Caco-2 (cell line): ENCODE measurements at regions of chr10 and their contacts with region 1.

Region 1: GRCh38 chr10:90579602-90580242 is 278.1 kb downstream of the HTR7 start:
- DNase-seq: peak; percentile 31 to 38
- H3K4me3 ChIP-seq: no peak overlapping the region
- H3K4me3 Mint-ChIP-seq: no peak overlapping the region
- H3K27ac Mint-ChIP-seq: no peak overlapping the region
- H3K4me1 ChIP-seq: no peaks in the 10 kb centered on the region
- H3K4me1 Mint-ChIP-seq: no peaks in the 10 kb centered on the region
- H3K27me3 ChIP-seq: no peaks in the 10 kb centered on the region
- H3K27me3 Mint-ChIP-seq: peaks cover 3% of the 10 kb centered on the region
- CTCF ChIP-seq: peak in 1 of 2 experiments; percentile 11

Region 2: DNA sequence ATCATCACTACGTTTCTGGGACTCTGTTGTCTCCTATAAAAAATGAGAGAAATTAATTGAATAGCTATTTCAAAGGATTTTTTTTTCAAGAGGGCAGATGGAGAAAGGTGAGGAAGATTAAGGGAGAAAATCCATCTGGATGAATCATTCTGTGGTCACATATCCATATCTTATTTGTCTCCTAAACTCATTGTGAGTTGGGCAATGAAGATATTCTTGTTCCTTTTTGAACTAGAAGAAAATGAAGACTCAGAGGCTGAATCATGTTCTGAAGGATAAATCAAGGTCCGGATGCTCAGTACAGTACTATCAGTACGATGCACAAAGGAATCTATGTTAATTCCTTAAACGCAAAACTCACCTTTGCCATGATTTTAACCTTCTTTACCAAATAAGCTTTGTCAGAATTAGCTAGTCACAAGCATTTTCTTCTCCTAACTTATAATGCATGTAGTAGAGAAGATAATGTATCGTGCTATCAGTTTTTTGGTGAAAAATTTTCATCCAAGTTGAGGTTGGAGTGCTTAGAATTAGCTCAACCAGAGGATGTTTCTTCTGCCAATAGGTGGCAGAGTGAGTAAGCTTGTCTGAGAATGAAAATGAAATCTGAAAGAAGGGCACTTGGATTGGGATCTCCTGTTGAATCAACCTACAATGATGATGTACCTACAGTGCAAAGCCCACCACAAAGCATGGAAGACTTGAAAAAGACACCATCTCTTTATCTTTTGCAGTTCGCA is 431.4 kb before region 1 on chr10:
- CTCF ChIA-PET with region 1: no interaction called
- POLR2A ChIA-PET with region 1: no interaction called
- intact Hi-C with region 1: loop called (anchors 1 kb)
- DNase-seq: peak in 1 of 2 experiments; percentile 16
- H3K4me3 ChIP-seq: no peak overlapping the region
- H3K4me3 Mint-ChIP-seq: no peak overlapping the region
- H3K27ac Mint-ChIP-seq: no peak overlapping the region
- H3K4me1 ChIP-seq: no peaks in the 10 kb centered on the region
- H3K4me1 Mint-ChIP-seq: no peaks in the 10 kb centered on the region
- H3K27me3 ChIP-seq: no peaks in the 10 kb centered on the region
- H3K27me3 Mint-ChIP-seq: peaks cover 8% of the 10 kb centered on the region
- CTCF ChIP-seq: peak; percentile 29 to 54

Region 3: DNA sequence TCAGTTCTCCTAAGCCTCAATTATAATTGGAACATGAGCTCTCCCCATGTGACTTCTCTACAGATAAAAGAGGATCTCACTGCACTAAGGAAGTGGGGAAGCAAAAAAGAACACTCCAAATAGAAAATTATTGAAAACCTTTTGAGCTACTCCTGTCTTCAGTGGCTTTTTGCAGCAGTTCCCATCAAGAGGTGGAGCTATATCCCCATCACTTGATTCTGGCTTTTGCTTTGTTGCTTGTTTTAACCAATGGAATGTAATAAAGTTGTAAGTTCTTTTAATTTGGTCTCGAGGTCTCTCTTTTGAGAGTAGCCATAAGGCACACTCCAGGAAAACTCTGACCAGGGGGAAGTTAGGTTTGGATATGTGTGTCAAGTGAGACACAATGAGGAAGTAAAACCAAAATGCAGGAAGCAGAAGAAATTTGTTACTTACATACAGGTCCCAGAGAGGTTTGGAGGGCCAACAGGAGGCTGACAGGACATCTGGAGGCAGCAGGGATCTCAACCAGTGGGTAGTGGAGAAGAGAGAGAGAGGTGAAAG is 291.3 kb before region 1 on chr10:
- CTCF ChIA-PET with region 1: no interaction called
- POLR2A ChIA-PET with region 1: no interaction called
- intact Hi-C with region 1: loop called (anchors 1 kb)
- DNase-seq: no peak
- H3K4me3 ChIP-seq: no peak overlapping the region
- H3K4me3 Mint-ChIP-seq: no peak overlapping the region
- H3K27ac Mint-ChIP-seq: no peak overlapping the region
- H3K4me1 ChIP-seq: no peaks in the 10 kb centered on the region
- H3K4me1 Mint-ChIP-seq: no peaks in the 10 kb centered on the region
- H3K27me3 ChIP-seq: no peaks in the 10 kb centered on the region
- H3K27me3 Mint-ChIP-seq: peaks cover 23% of the 10 kb centered on the region
- CTCF ChIP-seq: no peak